A549 (cell line): ENCODE measurements at regions of chr6 and their contacts with region 1.

Region 1: GRCh38 chr6:3848925-3849605 is at the start of gene FAM50B:
- DNase-seq: peak; percentile 58 to 85
- ATAC-seq: peak; percentile 98 to 99
- H3K4me3 ChIP-seq: peak within 1 kb of the TSS; percentile 38
- H3K27ac ChIP-seq: peak within 1 kb of the TSS; percentile 81 to 91
- H3K4me1 ChIP-seq: peaks cover under 1% of the 10 kb centered on the region; the same call in 2 of the 3 replicates
- CTCF ChIP-seq: peak; percentile 83
- EP300 ChIP-seq: no peak
- POLR2A ChIP-seq: no peak
- RAD21 ChIP-seq: peak; percentile 80 to 95
- polyA plus RNA-seq, gene FAM50B: 4.6 and 5.1 TPM in 2 replicates

Region 2: GRCh38 chr6:3669916-3670315 is 179.1 kb before region 1 on chr6:
- CTCF ChIA-PET with region 1: no interaction called
- POLR2A ChIA-PET with region 1: no interaction called
- DNase-seq: no peak
- ATAC-seq: no peak
- H3K4me3 ChIP-seq: no peak overlapping the region
- H3K27ac ChIP-seq: no peak overlapping the region
- H3K4me1 ChIP-seq: peaks cover 8% of the 10 kb centered on the region
- CTCF ChIP-seq: no peak
- EP300 ChIP-seq: no peak
- POLR2A ChIP-seq: no peak
- RAD21 ChIP-seq: no peak

Region 3: DNA sequence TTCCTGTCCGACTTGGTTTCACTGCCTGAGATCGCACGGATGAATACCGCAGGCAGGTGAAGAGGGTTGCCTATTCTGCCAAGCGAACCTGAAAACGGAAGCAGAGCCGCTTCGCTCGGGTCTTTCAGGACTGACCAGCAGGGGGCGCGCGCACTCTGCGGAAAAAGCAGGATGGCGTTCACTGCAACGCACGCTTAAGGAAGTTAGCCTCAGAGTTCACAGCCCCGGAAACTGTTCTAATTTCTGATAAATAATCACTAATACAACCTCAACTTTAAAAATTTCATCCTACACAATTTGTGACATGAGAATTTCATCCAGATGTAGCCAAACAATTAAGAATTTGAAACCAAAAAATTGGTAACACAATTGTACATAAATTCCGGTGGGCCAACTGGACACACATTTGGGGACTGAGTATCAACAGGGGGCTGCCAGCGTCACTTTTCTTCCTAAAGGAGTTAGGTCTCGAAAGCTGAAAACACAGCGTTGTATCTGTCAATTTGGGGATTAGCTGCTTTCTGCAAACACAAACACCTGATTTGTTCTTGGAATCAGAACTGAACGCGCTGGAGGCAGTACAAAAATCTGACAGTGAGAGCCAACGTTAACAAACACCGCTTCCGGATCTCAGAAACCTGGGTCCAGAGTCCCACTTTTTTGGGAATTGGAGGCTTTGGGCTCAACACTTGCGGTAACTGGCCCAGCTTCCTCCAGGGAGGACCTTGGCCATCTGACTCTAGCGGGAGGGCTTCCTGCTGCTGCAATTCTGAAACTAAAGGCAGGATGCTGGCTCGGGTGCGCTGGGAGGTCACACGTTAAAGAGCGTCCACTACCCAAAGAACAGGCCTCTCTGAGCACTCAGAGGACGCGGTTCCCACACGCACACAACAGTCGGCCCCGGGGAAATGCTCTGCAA is 106.4 kb before region 1 on chr6:
- CTCF ChIA-PET with region 1: interaction called, 43 read pairs
- POLR2A ChIA-PET with region 1: interaction called, 5 read pairs
- DNase-seq: peak; percentile 47 to 73
- ATAC-seq: peak; percentile 80 to 87
- H3K4me3 ChIP-seq: no peak overlapping the region
- H3K27ac ChIP-seq: peak overlapping the region; percentile 59 to 74; a peak in 5 of 6 replicates
- H3K4me1 ChIP-seq: peaks cover 20% of the 10 kb centered on the region
- CTCF ChIP-seq: peak; percentile 78
- EP300 ChIP-seq: no peak
- POLR2A ChIP-seq: no peak
- RAD21 ChIP-seq: peak; percentile 94

Region 4: DNA sequence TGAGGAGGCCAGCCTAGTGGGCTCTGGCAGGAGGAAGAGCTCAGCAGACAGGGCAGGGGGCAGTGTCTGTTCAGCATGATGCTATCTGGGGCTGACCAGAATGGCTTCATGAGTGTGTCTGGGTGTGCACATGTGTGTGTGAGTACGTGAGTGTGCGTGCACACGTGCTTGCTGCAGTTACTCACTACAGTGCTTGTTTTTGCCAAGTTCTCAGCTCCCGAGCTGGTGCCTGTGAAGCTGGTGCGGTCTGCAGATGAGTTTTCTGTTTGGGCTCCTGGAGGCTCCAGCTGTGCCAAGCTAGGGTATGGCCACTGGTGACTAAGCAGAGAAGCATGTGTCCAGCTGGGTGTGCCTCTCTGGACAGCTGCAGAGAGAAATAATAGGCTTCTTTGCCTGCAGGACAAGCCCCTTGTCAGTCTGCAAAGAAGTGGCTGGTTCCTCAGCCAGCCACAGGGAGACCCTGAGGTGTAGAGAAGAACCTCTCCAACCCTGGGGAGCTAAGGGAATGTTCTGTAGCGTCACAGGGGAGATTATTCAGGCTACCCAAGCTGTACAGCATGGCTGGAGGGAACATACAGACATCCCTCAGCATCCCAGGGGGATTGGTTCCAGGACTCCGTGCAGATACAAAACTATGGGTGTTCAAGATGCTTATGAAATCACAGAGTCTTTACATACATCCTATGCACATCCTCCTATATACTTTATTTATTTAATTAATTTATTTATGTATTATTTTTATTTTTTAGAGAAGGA is 40.1 kb before region 1 on chr6:
- CTCF ChIA-PET with region 1: interaction called, 26 read pairs
- POLR2A ChIA-PET with region 1: interaction called, 3 read pairs
- DNase-seq: peak; percentile 77 to 85
- ATAC-seq: peak; percentile 95
- H3K4me3 ChIP-seq: no peak overlapping the region
- H3K27ac ChIP-seq: peak overlapping the region; percentile 78 to 82
- H3K4me1 ChIP-seq: peaks cover 52% of the 10 kb centered on the region
- CTCF ChIP-seq: no peak
- EP300 ChIP-seq: no peak
- POLR2A ChIP-seq: no peak
- RAD21 ChIP-seq: no peak

Region 5: GRCh38 chr6:3887150-3887700 is 38.2 kb after region 1 on chr6:
- CTCF ChIA-PET with region 1: interaction called, 29 read pairs
- POLR2A ChIA-PET with region 1: no interaction called
- DNase-seq: peak in 1 of 2 experiments; percentile 23
- ATAC-seq: peak in 1 of 2 experiments; percentile 10; a peak in 2 of 6 replicates
- H3K4me3 ChIP-seq: no peak overlapping the region
- H3K27ac ChIP-seq: peak overlapping the region; percentile 74 to 86
- H3K4me1 ChIP-seq: peaks cover 54% of the 10 kb centered on the region
- CTCF ChIP-seq: peak; percentile 49
- EP300 ChIP-seq: no peak
- POLR2A ChIP-seq: no peak
- RAD21 ChIP-seq: peak; percentile 61 to 66

Region 6: DNA sequence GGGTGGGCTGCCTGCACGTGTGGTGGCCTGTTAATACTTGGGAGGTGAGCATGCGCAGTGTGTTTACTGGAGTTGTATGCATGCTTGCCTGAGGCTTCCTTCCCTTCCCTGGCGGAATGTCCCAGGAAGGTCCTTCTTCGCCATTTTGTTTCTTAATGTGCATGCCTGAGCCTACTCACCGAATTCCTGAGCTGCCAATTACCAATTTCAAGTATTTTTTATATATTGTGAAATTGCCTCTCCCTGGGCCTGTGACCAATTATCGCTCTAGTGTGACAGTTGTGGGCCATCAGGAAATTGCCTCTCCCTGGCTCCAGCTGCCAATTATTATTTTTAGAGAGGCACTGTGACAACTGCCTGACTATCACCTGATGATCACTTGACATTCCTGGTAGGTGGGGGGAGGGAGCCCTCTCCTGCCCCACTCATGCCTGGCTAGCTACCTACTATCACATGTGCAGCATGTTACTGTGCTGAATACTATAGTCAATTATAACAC is 70.1 kb after region 1 on chr6:
- CTCF ChIA-PET with region 1: interaction called, 51 read pairs
- POLR2A ChIA-PET with region 1: no interaction called
- DNase-seq: peak in 1 of 2 experiments; percentile 12
- ATAC-seq: 0 out of 6 replicates have a peak, but pooled peaks of 1 of the 2 experiments have one; percentile 24
- H3K4me3 ChIP-seq: no peak overlapping the region
- H3K27ac ChIP-seq: peak overlapping the region; percentile 50 to 56; a peak in 4 of 6 replicates
- H3K4me1 ChIP-seq: peaks cover 13% of the 10 kb centered on the region
- CTCF ChIP-seq: no peak
- EP300 ChIP-seq: no peak
- POLR2A ChIP-seq: no peak
- RAD21 ChIP-seq: no peak

Region 7: GRCh38 chr6:3960754-3961361 is 111.8 kb after region 1 on chr6:
- CTCF ChIA-PET with region 1: no interaction called
- POLR2A ChIA-PET with region 1: no interaction called
- DNase-seq: no peak
- ATAC-seq: no peak
- H3K4me3 ChIP-seq: no peak overlapping the region
- H3K27ac ChIP-seq: no peak overlapping the region
- H3K4me1 ChIP-seq: peaks cover 8% of the 10 kb centered on the region; the same call in 2 of the 3 replicates
- CTCF ChIP-seq: no peak
- EP300 ChIP-seq: no peak
- POLR2A ChIP-seq: no peak
- RAD21 ChIP-seq: no peak

Region 8: GRCh38 chr6:3977875-3978711 is 129.0 kb after region 1 on chr6:
- CTCF ChIA-PET with region 1: interaction called, 39 read pairs
- POLR2A ChIA-PET with region 1: interaction called, 4 read pairs
- DNase-seq: peak; percentile 34 to 86
- ATAC-seq: peak; percentile 97 to 99
- H3K4me3 ChIP-seq: no peak overlapping the region
- H3K27ac ChIP-seq: no peak overlapping the region
- H3K4me1 ChIP-seq: peaks cover 9% of the 10 kb centered on the region; the same call in 2 of the 3 replicates
- CTCF ChIP-seq: peak; percentile 73
- EP300 ChIP-seq: no peak
- POLR2A ChIP-seq: no peak
- RAD21 ChIP-seq: peak; percentile 69 to 76

Region 9: DNA sequence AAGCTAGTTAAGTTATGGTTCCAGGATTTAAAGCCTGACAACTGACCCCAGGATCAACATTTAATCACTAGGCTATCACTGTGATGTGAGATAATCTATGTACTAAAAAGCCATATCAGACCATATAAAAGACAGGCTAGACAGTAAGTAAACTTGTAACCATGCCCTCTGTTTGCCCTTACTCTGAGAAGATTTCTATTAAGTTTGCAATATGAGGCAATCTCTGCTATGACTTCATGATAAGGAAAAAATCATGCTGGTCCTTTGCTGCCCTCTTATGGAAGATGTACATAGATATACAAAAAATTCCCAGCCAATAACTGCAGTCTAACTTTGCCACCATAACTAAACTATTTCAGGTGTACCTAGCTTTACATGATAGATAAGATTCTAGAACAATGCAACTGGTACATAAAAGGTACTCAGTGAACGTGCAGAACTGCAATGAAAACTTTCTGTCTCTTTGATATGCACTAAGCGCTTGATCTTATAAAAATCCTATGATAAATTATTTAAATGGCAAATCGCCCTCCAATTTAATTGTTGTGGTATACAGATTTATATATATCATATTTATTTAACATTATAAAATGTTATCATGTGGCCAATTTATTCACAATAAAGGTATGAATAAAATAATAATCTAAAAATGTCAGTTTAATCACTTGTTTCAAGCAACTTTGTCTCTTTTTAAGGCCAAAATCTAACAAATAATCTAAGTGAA is 159.4 kb after region 1 on chr6:
- CTCF ChIA-PET with region 1: interaction called, 11 read pairs
- POLR2A ChIA-PET with region 1: no interaction called
- DNase-seq: peak; percentile 43 to 85
- ATAC-seq: peak; percentile 87
- H3K4me3 ChIP-seq: no peak overlapping the region
- H3K27ac ChIP-seq: peak overlapping the region; percentile 67 to 83
- H3K4me1 ChIP-seq: peaks cover 39% of the 10 kb centered on the region
- CTCF ChIP-seq: peak; percentile 63
- EP300 ChIP-seq: 0 out of 5 replicates have a peak, but pooled peaks of 1 of the 2 experiments have one; percentile 36
- POLR2A ChIP-seq: no peak
- RAD21 ChIP-seq: peak; percentile 69 to 74